RWPE1 (cell line): ENCODE measurements at regions of chr17 and their contacts with region 1.

Region 1: DNA sequence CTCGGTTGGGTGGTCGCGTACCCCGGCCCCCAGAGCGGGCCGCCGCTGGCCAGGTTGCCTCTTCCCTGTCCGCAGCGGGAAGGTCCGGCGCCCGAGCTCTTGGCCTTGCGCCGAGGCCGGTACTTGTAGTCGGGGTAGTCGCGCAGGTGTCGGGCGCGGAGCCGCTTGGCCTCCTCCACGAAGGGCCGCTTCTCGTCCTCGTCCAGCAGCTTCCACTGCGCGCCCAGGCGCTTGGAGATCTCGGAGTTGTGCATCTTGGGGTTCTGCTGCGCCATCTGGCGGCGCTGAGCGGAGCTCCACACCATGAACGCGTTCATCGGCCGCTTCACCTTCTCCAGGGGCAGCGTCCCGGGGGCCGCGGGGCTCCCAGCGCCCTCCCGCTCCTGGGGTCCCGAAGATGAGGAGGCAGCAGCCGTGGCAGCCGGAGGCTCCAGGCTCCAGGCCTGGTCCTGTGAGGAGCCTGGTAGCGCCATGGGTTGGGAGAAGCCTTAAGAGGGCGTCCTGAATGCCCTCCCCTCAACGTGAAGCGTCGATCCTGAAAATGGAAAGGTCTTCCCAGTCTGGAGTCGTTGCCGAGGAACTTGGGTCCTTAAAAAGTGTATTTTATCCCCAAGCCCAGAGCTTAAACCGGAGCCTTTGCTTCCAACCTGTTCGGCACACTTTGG is 558 bp downstream of the SOX15 start:
- DNase-seq: peak; percentile 71
- H3K27ac ChIP-seq: peak overlapping the region; percentile 100
- CTCF ChIP-seq: peak; percentile 90

Region 2: DNA sequence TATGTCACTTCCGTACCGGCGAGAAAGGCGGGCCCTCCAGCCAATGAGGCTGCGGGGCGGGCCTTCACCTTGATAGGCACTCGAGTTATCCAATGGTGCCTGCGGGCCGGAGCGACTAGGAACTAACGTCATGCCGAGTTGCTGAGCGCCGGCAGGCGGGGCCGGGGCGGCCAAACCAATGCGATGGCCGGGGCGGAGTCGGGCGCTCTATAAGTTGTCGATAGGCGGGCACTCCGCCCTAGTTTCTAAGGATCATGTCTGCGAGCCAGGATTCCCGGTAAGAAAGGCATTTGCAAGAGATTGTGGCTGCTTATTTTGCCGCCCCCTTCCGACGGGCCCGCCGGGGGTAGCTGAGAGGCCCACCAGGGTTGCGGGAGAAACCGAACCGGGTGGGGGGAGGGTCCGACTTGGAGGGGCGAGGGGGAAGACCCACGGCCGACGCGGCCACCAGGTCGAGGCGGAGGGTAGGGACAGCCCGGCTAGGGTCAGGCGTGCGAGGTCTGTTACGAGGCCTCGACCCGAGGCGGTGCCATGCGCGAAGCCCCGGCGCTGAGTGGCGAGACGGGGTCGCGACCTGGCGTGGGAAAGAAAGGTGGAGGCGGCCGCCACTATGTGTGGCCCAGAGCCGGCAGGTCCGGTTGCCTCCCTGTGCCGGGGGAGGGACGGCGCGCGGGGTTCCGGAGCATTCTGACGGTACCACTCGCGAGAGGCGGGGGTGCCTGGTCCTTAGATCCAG is 16.6 kb before region 1 on chr17:
- CTCF ChIA-PET with region 1: interaction called, 8 read pairs
- POLR2A ChIA-PET with region 1: interaction called, 28 read pairs
- DNase-seq: peak; percentile 99
- H3K27ac ChIP-seq: peak overlapping the region; percentile 98
- CTCF ChIP-seq: no peak

Region 3: GRCh38 chr17:7579001-7579808 is 10.1 kb before region 1 on chr17 and contains the start of gene CD68:
- CTCF ChIA-PET with region 1: interaction called, 21 read pairs
- POLR2A ChIA-PET with region 1: interaction called, 28 read pairs
- DNase-seq: peak; percentile 90
- H3K27ac ChIP-seq: peak within 1 kb of the TSS; percentile 100
- CTCF ChIP-seq: no peak

Region 4: DNA sequence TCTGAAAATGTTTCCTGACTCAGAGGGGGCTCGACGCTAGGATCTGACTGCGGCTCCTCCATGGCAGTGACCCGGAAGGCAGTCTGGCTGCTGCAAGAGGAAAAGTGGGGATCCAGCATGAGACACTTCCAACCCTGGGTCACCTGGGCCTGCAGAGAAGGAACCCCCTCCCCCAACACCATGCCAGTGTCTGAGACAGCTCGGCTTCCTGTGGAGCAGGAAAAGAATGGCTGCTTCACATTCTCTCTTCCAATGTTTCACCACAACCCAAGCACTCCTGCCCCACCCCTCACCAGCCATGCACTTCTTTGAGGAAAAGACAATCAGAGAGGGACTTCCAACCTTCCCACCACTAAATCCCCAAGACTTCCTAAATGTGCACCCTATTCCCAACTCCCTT is 87.2 kb after region 1 on chr17:
- CTCF ChIA-PET with region 1: no interaction called
- POLR2A ChIA-PET with region 1: no interaction called
- DNase-seq: no peak
- H3K27ac ChIP-seq: 0 out of 2 replicates have a peak overlapping the region, but pooled peaks have one; percentile 12
- CTCF ChIP-seq: no peak